ENCODE measurements at regions of chr13 and their contacts with region 1.

Region 1: DNA sequence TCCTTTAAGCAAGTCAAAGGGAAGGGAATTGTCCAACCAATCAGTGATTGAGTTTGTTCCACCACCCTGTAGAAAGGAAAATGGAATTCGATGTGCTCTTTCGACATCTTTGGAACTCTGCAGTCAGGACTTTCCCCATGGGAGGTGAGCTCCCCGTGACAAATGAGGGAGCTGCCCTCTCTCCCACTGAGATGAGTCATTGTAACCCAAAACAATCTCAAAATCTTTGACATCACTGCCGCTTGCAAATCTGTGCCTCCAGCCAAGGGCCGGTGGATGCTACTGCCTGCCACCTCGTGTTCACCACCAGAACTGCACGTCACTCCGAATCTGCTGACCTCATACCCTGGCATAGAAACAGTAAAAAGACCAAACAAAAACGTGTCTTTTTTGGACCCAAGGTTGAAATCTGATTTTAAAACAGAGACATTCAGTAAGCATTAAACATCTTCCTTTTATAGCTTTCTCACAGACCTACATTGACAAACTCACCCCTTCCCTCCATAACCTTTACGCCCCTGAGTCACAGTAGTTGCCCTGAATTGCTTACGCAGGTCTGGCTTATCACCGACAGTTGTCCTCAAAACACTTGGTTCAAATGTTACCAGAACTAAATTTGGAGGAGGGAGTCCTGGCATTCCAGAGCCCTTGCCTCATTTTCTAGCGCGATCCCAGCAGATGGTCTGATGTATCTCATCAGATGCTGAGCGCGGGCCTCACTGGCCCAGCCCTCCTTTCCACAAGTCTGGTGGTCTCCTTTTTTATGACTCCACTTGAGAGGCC is 105.2 kb downstream of the COL4A2 start:
- DNase-seq: peak; percentile 49
- ATAC-seq: peak; percentile 89
- H3K4me3 ChIP-seq: no peak overlapping the region
- H3K27ac ChIP-seq: no peak overlapping the region
- H3K4me1 ChIP-seq: no peaks in the 10 kb centered on the region
- H3K27me3 ChIP-seq: peaks cover 1 to 23% of the 10 kb centered on the region in 2 experiments; a peak in 3 of 5 replicates
- CTCF ChIP-seq: peak; percentile 78
- EP300 ChIP-seq: no peak
- POLR2A ChIP-seq: no peak
- RAD21 ChIP-seq: peak; percentile 68

Region 2: DNA sequence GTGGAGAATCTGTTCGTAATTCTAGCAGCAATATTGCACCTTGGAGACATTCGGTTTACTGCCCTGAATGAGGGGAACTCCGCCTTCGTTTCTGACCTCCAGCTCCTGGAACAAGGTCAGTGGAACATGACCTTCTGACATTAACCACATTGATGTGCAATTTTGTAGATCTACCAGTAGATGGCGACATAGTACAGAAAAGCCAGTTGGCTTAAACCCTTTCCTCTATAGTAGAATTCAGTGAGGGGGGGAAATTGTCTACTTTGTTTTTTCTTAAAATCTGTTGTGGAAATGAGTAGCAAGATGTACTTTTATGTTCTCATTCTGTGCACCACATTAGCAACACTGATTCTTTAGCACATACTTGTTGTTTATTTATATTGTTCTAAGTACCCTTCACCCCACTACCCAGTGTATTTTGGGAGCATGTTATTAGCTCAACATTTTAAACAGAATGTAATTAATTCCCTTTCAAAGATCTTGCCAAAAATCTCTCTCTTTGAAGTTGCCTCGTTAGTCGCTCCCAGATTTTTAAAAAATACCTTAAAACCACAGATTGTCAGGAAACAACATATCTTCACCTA is 1450.7 kb before region 1 on chr13:
- CTCF ChIA-PET with region 1: no interaction called
- POLR2A ChIA-PET with region 1: no interaction called
- in situ Hi-C with region 1: loop called (anchors 25 kb)
- intact Hi-C with region 1: loop called (anchors 5 kb)
- DNase-seq: peak; percentile 43
- ATAC-seq: peak; percentile 86
- H3K4me3 ChIP-seq: no peak overlapping the region
- H3K27ac ChIP-seq: no peak overlapping the region
- H3K4me1 ChIP-seq: no peaks in the 10 kb centered on the region
- H3K27me3 ChIP-seq: no peaks in the 10 kb centered on the region; a peak in 1 of 5 replicates
- CTCF ChIP-seq: peak; percentile 84
- EP300 ChIP-seq: no peak
- POLR2A ChIP-seq: no peak
- RAD21 ChIP-seq: peak; percentile 55; the same call in 1 of the 2 replicates

Region 3: GRCh38 chr13:110216398-110217041 is 195.8 kb before region 1 on chr13:
- CTCF ChIA-PET with region 1: interaction called, 32 read pairs
- POLR2A ChIA-PET with region 1: no interaction called
- in situ Hi-C with region 1: loop called (anchors 5 kb)
- intact Hi-C with region 1: no loop called
- DNase-seq: no peak
- ATAC-seq: no peak
- H3K4me3 ChIP-seq: no peak overlapping the region
- H3K27ac ChIP-seq: no peak overlapping the region
- H3K4me1 ChIP-seq: no peaks in the 10 kb centered on the region
- H3K27me3 ChIP-seq: peaks cover 0 to 17% of the 10 kb centered on the region in 2 experiments; a peak in 1 of 5 replicates
- CTCF ChIP-seq: no peak
- EP300 ChIP-seq: no peak
- POLR2A ChIP-seq: no peak
- RAD21 ChIP-seq: no peak

Region 4: DNA sequence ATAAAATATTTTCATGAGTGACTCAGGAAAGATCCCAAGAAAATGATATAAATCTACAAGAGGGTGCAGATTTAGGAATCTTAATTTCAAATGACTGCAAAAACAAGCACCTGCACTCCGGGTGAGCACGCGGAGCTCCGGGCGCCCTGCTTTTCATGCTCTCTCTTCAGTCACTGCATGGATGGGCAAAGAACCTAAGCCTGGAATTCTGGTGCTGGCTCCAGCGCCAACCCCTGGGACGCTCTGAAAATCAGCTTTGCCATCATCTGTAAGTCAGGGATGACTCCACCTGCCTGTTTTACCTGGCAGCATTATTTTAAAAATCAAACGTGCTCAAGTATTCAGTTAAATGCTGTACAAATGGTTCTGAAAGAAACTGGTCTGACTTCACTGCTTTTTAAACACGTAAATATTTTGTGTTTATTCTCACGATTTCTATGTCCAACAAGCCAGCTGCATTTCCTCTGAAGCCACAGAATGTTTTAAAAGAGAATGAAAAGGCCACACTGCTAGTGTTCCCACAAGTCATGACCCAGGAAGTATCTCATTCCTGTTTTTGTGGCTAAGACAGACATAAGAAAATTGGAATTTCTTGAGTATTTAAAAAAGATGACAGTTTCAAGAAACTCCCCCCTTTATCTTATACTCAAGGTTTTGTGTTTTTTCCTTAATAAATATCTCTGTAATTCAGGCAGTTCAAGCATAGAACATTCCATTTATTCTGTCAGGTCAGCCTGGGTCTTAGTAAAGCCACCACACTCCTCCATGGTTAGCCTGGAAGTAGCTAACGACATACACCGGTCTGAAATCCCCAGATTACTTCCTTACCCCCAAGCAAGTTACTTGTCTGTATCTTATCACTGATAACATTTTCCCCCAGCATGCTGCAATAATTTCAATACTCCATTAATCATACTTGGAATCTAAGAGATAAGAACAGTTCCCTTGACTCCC is 186.4 kb before region 1 on chr13:
- CTCF ChIA-PET with region 1: interaction called, 32 read pairs
- POLR2A ChIA-PET with region 1: no interaction called
- in situ Hi-C with region 1: loop called (anchors 5 kb)
- intact Hi-C with region 1: loop called (anchors 1 kb)
- DNase-seq: no peak
- ATAC-seq: no peak
- H3K4me3 ChIP-seq: no peak overlapping the region
- H3K27ac ChIP-seq: no peak overlapping the region
- H3K4me1 ChIP-seq: no peaks in the 10 kb centered on the region
- H3K27me3 ChIP-seq: peaks cover 2 to 18% of the 10 kb centered on the region in 2 experiments; a peak in 3 of 5 replicates
- CTCF ChIP-seq: no peak
- EP300 ChIP-seq: no peak
- POLR2A ChIP-seq: no peak
- RAD21 ChIP-seq: no peak

Region 5: DNA sequence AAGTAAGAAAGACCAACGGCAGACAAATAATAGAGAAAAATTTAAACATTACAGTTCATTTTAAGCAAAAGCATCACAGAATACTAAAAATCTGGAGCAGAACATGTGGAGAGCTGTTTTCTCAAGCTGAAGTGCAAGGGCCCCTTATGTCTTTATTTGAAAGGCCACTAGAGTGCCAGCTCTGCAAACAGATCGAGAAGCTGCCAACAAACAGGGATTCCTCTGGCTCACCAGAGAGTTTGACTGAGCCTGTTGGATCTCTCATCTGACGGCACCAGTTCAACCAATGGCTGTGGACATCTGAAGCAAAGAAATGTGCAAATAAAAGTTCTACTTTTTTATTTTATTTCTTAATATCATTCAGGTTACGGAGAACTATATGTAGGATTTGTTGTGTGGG is 14.4 kb after region 1 on chr13:
- CTCF ChIA-PET with region 1: no interaction called
- POLR2A ChIA-PET with region 1: no interaction called
- in situ Hi-C with region 1: no loop called
- intact Hi-C with region 1: no loop called
- DNase-seq: no peak
- ATAC-seq: no peak
- H3K4me3 ChIP-seq: no peak overlapping the region
- H3K27ac ChIP-seq: no peak overlapping the region
- H3K4me1 ChIP-seq: no peaks in the 10 kb centered on the region
- H3K27me3 ChIP-seq: peaks cover 1 to 33% of the 10 kb centered on the region in 2 experiments; a peak in 4 of 5 replicates
- CTCF ChIP-seq: no peak
- EP300 ChIP-seq: no peak
- POLR2A ChIP-seq: no peak
- RAD21 ChIP-seq: no peak

Measured in HepG2 (cell line).